ENCODE measurements at regions of chr11 and their contacts with region 1.

Region 1: GRCh38 chr11:5345831-5346230 is 2.5 kb upstream of the OR51B5 start:
- DNase-seq: no peak
- H3K4me3 ChIP-seq: no peak overlapping the region
- H3K4me3 Mint-ChIP-seq: no peak overlapping the region
- H3K27ac ChIP-seq: no peak overlapping the region
- H3K27ac Mint-ChIP-seq: no peak overlapping the region
- H3K4me1 ChIP-seq: no peaks in the 10 kb centered on the region
- H3K4me1 Mint-ChIP-seq: no peaks in the 10 kb centered on the region
- H3K27me3 ChIP-seq: no peaks in the 10 kb centered on the region
- H3K27me3 Mint-ChIP-seq: peaks cover 0 to 3% (median 0%) of the 10 kb centered on the region in 3 donors
- CTCF ChIP-seq: no peak

Region 2: GRCh38 chr11:5065027-5065426 is 280.8 kb before region 1 on chr11:
- intact Hi-C with region 1: loop called in 1 of 2 experiments (anchors 5 kb)
- DNase-seq: no peak
- H3K4me3 ChIP-seq: no peak overlapping the region
- H3K4me3 Mint-ChIP-seq: no peak overlapping the region
- H3K27ac ChIP-seq: no peak overlapping the region
- H3K27ac Mint-ChIP-seq: no peak overlapping the region
- H3K4me1 ChIP-seq: no peaks in the 10 kb centered on the region
- H3K4me1 Mint-ChIP-seq: no peaks in the 10 kb centered on the region
- H3K27me3 ChIP-seq: no peaks in the 10 kb centered on the region
- H3K27me3 Mint-ChIP-seq: peaks cover 0 to 2% (median 0%) of the 10 kb centered on the region in 3 donors
- CTCF ChIP-seq: no peak